Pancreas (tissue), 10 donors: ENCODE measurements at regions of chr7 and their contacts with region 1.

Region 1: GRCh38 chr7:135169141-135169960 is 1.2 kb downstream of the CYREN start:
- DNase-seq: no peak
- ATAC-seq: peak in 2 of 4 donors; percentile 3 to 4
- H3K4me3 ChIP-seq: peak overlapping the region; percentile 79 to 97 (median 93)
- H3K27ac ChIP-seq: peak overlapping the region; percentile 95 to 99 (median 96)
- H3K4me1 ChIP-seq: peaks cover 5 to 18% (median 13%) of the 10 kb centered on the region in 3 donors
- H3K27me3 ChIP-seq: no peaks in the 10 kb centered on the region
- CTCF ChIP-seq: no peak

Region 2: GRCh38 chr7:134986363-134987251 is 182.7 kb before region 1 on chr7 and contains the start of gene AGBL3:
- intact Hi-C with region 1: loop called in 2 of 3 experiments (anchors 10 kb)
- DNase-seq: peak; percentile 95 to 98 (median 96)
- ATAC-seq: peak; percentile 95 to 99 (median 98)
- H3K4me3 ChIP-seq: peak within 1 kb of the TSS; percentile 55 to 76 (median 66)
- H3K27ac ChIP-seq: peak within 1 kb of the TSS; percentile 74 to 93 (median 88)
- H3K4me1 ChIP-seq: peaks cover 0 to 35% (median 31%) of the 10 kb centered on the region in 3 donors
- H3K27me3 ChIP-seq: no peaks in the 10 kb centered on the region
- CTCF ChIP-seq: peak in 3 of 4 donors; percentile 32 to 43 (median 33)
- total RNA-seq, gene AGBL3: 0.95 to 4.1 (median 2.7) TPM

Region 3: DNA sequence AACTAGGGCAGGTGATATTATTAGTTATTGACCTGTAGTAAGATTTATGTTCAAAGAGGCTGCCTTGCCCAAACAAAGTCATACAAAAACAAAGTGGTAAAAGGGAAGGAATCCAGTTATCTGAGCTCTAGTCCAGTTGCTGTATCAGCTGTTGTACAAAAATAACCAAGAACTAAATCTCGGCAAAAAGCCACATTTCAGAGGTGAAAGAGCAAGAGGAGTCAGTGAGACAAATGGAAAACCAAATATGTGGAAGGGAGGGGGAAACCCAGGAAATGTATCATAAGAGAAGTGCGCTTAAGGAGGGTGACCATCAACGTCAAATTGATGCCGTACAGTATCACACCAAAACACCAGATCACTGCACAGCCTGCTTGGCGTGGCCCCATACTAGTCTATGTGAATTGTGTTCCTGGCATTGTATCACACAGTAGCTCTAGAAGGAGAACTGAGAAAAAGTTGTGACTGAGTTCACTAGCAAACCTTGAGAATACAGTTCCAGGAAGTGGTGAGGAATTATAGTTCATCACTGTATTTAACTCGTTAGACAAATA is 176.6 kb before region 1 on chr7:
- intact Hi-C with region 1: loop called in 2 of 3 experiments (anchors 10 kb)
- DNase-seq: no peak
- ATAC-seq: peak; percentile 30 to 67 (median 42)
- H3K4me3 ChIP-seq: no peak overlapping the region
- H3K27ac ChIP-seq: peak overlapping the region; percentile 5 to 74 (median 58)
- H3K4me1 ChIP-seq: peaks cover 15 to 62% (median 56%) of the 10 kb centered on the region in 3 donors
- H3K27me3 ChIP-seq: no peaks in the 10 kb centered on the region
- CTCF ChIP-seq: no peak